Activated naive CD4-positive, alpha-beta T cell treated with anti-CD3 and anti-CD28 coated beads, Interleukin-2, amount 10 ng/mL, durations not matched to agents 7 days and 5 days (primary cell): ENCODE measurements at regions of chr16 and their contacts with region 1.

Region 1: GRCh38 chr16:49407873-49408550 is 34.4 kb downstream of the C16orf78 start:
- DNase-seq: peak; percentile 80
- H3K4me3 Mint-ChIP-seq: no peak overlapping the region
- H3K27ac Mint-ChIP-seq: no peak overlapping the region
- H3K4me1 Mint-ChIP-seq: no peaks in the 10 kb centered on the region
- H3K27me3 Mint-ChIP-seq: peaks cover 12% of the 10 kb centered on the region

Region 2: GRCh38 chr16:49592546-49593423 is 184.8 kb after region 1 on chr16:
- CTCF ChIA-PET with region 1: interaction called, 16 read pairs
- DNase-seq: peak; percentile 58
- H3K4me3 Mint-ChIP-seq: no peak overlapping the region
- H3K27ac Mint-ChIP-seq: no peak overlapping the region
- H3K4me1 Mint-ChIP-seq: peaks cover 15% of the 10 kb centered on the region
- H3K27me3 Mint-ChIP-seq: peaks cover 31% of the 10 kb centered on the region

Region 3: DNA sequence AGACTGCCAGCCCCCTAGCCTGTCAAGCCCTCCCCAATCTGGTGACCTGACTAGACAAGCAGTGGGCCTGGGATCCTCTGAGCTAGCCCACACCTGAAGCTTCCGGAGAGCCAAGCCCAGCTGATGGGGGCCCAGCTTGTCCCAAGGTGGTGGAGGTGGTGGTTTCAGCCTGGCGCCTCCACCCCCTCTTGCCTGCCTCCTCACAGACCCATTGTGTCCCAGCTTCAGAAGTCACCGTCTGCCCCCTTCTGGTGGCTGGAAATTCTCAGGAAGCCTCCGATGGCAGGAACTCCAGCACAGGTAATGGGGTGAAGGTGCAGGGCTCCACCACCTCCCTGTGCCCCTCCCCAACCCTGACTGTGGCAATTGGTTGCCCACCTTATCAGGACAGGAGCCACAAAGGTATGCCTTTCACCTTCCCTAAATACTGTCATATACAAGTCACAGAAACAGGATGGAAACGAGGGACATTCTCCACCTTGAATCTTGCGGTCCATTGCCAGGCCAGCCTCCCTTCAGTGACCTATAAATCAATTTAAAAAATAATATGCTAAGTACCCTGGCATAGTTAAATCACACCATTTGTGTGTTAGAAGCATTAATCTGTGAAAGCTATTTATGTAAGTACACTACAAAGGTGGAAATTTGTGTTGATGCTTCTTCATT is 513.9 kb after region 1 on chr16:
- CTCF ChIA-PET with region 1: interaction called, 11 read pairs
- DNase-seq: peak; percentile 62
- H3K4me3 Mint-ChIP-seq: no peak overlapping the region
- H3K27ac Mint-ChIP-seq: no peak overlapping the region
- H3K4me1 Mint-ChIP-seq: no peaks in the 10 kb centered on the region
- H3K27me3 Mint-ChIP-seq: peaks cover 20% of the 10 kb centered on the region